WTC11 (cell line): ENCODE measurements at regions of chr15 and their contacts with region 1.

Region 1: GRCh38 chr15:88657326-88658069 is 18.7 kb downstream of the ISG20 start:
- DNase-seq: peak; percentile 62
- ATAC-seq: peak; percentile 56
- H3K4me3 Mint-ChIP-seq: no peak overlapping the region
- H3K27ac Mint-ChIP-seq: no peak overlapping the region
- H3K4me1 Mint-ChIP-seq: peaks cover 10% of the 10 kb centered on the region
- H3K27me3 Mint-ChIP-seq: no peaks in the 10 kb centered on the region
- CTCF ChIP-seq: peak; percentile 57; the same call in 1 of the 2 replicates

Region 2: DNA sequence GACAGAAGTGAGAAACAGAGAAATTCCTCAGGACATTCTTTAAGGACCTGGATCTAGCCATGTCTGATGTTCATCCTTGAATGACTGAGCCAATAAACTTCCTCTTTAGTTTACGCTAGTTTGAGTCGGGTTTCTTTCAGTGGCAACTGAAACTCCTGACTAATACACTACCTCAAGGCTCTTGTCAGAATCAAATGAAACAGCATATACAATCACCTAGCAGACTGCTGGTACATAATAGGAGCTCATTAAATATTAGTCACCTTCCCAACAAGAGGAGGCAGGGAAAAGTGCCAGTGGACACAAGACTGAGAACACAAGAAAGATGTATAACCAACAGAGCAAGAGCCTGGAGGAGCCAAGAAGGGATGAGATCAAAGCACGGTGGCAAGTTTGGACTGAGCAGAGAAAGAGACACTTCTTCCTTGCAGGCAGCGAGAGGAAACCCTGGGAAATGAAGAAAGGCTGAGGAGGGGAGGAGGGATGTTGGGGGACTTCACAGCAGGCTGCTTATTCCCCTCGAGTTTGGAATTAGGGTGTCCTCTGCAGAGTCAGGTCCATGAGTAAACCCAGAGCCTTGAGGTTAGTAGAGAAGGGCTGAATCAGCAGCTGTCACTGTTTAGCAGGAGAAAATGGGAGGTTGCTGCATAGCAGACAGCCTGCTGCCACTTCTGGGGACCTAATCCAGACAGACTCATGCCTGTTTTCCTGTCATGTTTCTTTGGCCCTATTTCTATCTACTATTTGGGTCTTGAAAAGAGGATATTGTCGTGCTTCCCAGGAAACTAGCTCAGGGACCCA is 263.6 kb before region 1 on chr15:
- CTCF ChIA-PET with region 1: no interaction called
- POLR2A ChIA-PET with region 1: no interaction called
- DNase-seq: no peak
- ATAC-seq: no peak
- H3K4me3 Mint-ChIP-seq: no peak overlapping the region
- H3K27ac Mint-ChIP-seq: no peak overlapping the region
- H3K4me1 Mint-ChIP-seq: peaks cover 5% of the 10 kb centered on the region; the same call in 1 of the 2 replicates
- H3K27me3 Mint-ChIP-seq: no peaks in the 10 kb centered on the region; the same call in 1 of the 2 replicates
- CTCF ChIP-seq: no peak

Region 3: GRCh38 chr15:88701561-88702095 is 44.1 kb after region 1 on chr15:
- CTCF ChIA-PET with region 1: interaction called, 14 read pairs
- POLR2A ChIA-PET with region 1: no interaction called
- DNase-seq: peak; percentile 65
- ATAC-seq: peak; percentile 76
- H3K4me3 Mint-ChIP-seq: no peak overlapping the region
- H3K27ac Mint-ChIP-seq: no peak overlapping the region
- H3K4me1 Mint-ChIP-seq: peaks cover 5% of the 10 kb centered on the region; the same call in 1 of the 2 replicates
- H3K27me3 Mint-ChIP-seq: peaks cover 59% of the 10 kb centered on the region
- CTCF ChIP-seq: peak; percentile 52

Region 4: GRCh38 chr15:88834211-88834812 is 176.8 kb after region 1 on chr15:
- CTCF ChIA-PET with region 1: interaction called, 21 read pairs
- POLR2A ChIA-PET with region 1: no interaction called
- DNase-seq: peak; percentile 77
- ATAC-seq: peak; percentile 79
- H3K4me3 Mint-ChIP-seq: no peak overlapping the region
- H3K27ac Mint-ChIP-seq: no peak overlapping the region
- H3K4me1 Mint-ChIP-seq: no peaks in the 10 kb centered on the region
- H3K27me3 Mint-ChIP-seq: no peaks in the 10 kb centered on the region
- CTCF ChIP-seq: peak; percentile 53

Region 5: GRCh38 chr15:88878720-88879184 is 221.3 kb after region 1 on chr15:
- CTCF ChIA-PET with region 1: interaction called, 10 read pairs
- POLR2A ChIA-PET with region 1: no interaction called
- DNase-seq: peak; percentile 86
- ATAC-seq: peak; percentile 92
- H3K4me3 Mint-ChIP-seq: no peak overlapping the region
- H3K27ac Mint-ChIP-seq: peak overlapping the region; percentile 85; the same call in 1 of the 2 replicates
- H3K4me1 Mint-ChIP-seq: peaks cover 14% of the 10 kb centered on the region
- H3K27me3 Mint-ChIP-seq: no peaks in the 10 kb centered on the region
- CTCF ChIP-seq: peak; percentile 60